ENCODE measurements at regions of chr18 and their contacts with region 1.

Region 1: DNA sequence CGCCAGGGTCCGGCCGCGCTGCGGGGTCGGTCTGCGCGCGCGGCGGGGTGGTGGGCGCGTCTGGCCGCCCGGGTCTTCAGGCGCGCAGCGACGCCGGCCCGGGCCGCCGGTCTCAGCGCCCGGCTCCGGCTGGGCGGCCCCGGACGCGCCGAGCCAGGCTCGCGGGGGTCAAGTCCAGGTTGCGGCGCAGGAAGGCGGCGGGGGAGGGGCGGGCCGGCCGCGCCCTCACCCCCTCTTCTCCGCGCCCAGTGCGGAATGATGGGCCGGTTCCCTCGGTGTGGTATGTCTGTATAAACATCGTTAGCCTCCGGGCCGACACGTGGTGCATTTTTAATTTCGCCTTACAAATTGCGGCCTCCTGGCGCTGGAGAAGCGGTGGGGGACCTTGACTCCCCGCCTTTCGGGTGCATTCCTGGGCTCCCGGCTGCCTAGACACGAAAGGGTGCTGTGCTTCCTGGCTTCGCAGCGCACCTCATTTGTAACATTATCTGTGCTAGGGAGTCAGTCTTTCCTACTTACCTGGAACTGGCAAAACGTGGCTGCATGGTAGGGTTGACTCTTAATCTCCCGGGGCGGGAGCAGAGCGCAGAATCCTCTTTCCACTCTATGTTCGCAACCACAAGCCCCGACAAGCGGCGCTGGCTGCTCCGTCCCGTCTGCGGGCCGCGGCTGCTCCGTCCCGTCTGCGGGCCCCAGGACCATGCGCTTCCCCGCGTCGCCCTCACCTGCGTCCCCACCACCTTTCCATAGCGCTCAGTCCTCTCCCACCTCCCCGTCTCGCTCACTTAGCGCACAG is 69.0 kb downstream of the CTAGE1 start:
- DNase-seq: peak; percentile 89
- ATAC-seq: peak; percentile 75

Region 2: DNA sequence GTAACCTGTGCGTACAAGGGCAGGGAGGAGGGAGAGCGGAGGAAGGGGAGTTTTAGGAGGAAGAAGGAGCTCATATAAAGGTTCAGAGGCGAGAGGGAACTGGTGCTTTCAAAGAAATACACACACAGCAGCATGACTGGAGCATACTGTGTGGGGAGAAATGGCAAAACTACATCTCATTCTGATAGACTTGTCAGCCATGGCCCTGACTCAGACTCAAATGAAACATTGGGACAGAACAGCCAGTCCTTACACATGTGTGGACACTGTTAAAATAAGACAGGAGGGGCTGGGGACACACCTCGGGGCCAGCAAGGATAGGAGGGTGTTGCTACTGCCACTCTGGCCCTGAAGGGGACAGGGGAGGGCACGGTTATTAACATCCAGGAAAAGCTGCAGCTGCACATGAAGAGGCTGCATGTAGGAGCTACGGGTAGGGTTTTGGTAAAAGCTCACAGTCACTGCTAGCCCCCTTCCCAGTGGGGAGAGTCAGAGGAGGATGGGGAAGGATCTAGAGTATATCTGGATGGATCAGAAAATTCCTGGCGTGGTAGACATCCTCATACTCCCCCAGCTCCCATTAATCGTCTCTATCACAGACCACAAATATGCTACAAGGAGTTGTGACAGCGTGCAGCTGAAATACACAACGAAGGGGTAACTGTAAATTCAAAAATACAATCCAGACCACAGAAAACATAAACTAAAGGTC is 68.8 kb before region 1 on chr18:
- intact Hi-C with region 1: loop called (anchors 10 kb)
- DNase-seq: no peak
- ATAC-seq: peak; percentile 41

Measured in left ventricle myocardium superior (tissue), 1 donor.